Panc1 (cell line): ENCODE measurements at regions of chr20 and their contacts with region 1.

Region 1: DNA sequence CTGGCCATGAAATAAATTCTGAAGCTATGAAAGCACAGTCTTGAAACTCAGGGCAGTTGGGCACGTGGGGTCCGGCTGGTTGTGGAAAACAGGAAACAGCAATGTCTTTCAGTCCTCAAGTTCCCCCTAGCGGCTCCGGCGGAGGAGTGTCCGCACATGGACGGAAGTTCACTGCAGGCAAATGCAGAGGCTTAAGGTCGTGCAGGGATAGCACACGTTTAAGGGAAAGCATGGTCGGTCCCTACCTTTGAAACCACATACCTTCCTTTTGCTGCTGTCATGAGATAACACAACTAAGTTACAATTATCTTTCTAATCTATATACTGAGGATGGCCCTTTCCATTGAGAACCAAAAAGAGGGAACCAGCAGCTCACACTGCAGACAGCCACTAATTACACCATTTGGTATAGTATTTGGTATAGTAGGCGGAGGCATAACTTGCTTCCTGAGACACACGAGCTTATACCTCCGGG is 52.6 kb upstream of the NFATC2 start:
- DNase-seq: peak; percentile 82
- ATAC-seq: peak; percentile 99
- H3K4me3 ChIP-seq: no peak overlapping the region
- H3K27ac ChIP-seq: peak overlapping the region; percentile 80
- H3K4me1 ChIP-seq: peaks cover 13% of the 10 kb centered on the region
- H3K27me3 ChIP-seq: no peaks in the 10 kb centered on the region
- CTCF ChIP-seq: peak; percentile 92

Region 2: GRCh38 chr20:51372176-51372803 is 222.8 kb before region 1 on chr20:
- CTCF ChIA-PET with region 1: interaction called, 3 read pairs
- POLR2A ChIA-PET with region 1: no interaction called
- in situ Hi-C with region 1: no loop called
- intact Hi-C with region 1: loop called (anchors 2 kb)
- DNase-seq: no peak
- ATAC-seq: peak; percentile 99
- H3K4me3 ChIP-seq: no peak overlapping the region
- H3K27ac ChIP-seq: no peak overlapping the region
- H3K4me1 ChIP-seq: no peaks in the 10 kb centered on the region
- H3K27me3 ChIP-seq: no peaks in the 10 kb centered on the region
- CTCF ChIP-seq: peak; percentile 93

Region 3: GRCh38 chr20:51385646-51386530 is 209.2 kb before region 1 on chr20:
- CTCF ChIA-PET with region 1: interaction called, 14 read pairs
- POLR2A ChIA-PET with region 1: no interaction called
- in situ Hi-C with region 1: no loop called
- intact Hi-C with region 1: loop called (anchors 2 kb)
- DNase-seq: peak; percentile 39
- ATAC-seq: peak; percentile 84
- H3K4me3 ChIP-seq: no peak overlapping the region
- H3K27ac ChIP-seq: peak overlapping the region; percentile 24; the same call in 1 of the 2 replicates
- H3K4me1 ChIP-seq: peaks cover 11% of the 10 kb centered on the region
- H3K27me3 ChIP-seq: no peaks in the 10 kb centered on the region
- CTCF ChIP-seq: peak; percentile 81

Region 4: DNA sequence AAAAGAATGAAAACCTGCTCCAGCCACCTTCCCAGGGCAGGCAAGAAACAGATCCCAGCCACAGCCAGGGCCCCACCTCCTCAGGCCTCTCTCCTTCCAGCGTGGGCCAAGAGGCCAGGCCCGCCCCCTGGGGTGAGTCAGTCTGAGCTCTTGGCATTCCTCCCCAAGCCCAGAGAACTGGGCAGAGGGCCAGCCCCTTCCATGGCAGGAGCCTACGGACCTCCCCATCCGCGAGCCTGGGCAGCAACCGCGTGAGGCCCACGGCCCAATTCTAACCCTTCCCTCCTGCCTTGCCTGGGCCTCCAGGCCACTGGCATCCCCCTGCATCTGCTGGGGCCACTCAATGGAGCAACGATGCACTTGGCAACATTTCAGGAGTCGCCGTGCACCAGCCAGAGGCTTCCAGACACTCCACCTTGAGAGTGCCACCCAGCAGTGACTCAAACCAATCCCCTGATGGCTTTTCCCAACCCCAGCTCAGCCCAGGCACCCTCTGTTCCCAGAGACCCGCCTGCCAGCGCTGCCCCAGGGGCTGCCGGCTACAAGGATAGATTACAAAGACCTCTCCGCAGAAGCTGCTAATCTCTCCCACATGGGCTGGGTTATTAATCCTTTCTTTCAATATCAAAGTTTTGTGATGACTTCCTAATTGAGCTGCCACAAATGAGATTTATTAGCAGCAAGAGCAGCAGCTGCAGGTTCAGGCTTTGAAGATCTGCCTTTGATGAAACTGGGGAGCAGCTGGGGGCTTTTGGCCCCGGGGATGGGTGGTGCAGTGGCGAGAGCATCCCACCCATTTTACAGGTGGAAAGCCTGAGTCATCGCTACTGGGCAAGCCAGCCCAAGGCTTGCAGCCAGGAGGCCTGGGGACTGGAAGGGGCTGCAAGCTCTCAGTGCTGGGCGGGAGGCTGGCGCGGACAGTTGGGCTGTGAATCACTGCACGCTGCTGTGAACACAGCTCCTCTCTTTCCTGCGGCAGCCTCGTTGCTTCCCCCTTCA is 138.3 kb before region 1 on chr20:
- CTCF ChIA-PET with region 1: interaction called, 13 read pairs
- POLR2A ChIA-PET with region 1: no interaction called
- in situ Hi-C with region 1: no loop called
- intact Hi-C with region 1: no loop called
- DNase-seq: peak; percentile 89
- ATAC-seq: peak; percentile 94
- H3K4me3 ChIP-seq: peak overlapping the region; percentile 23 to 55
- H3K27ac ChIP-seq: peak overlapping the region; percentile 97
- H3K4me1 ChIP-seq: peaks cover 42% of the 10 kb centered on the region
- H3K27me3 ChIP-seq: no peaks in the 10 kb centered on the region
- CTCF ChIP-seq: no peak